H1 (cell line): ENCODE measurements at regions of chr11 and their contacts with region 1.

Region 1: GRCh38 chr11:100681064-100681502 is 6.0 kb upstream of the ARHGAP42 start:
- DNase-seq: no peak
- H3K4me3 ChIP-seq: no peak overlapping the region
- H3K27ac ChIP-seq: no peak overlapping the region
- H3K4me1 ChIP-seq: peaks cover 2 to 8% (median 4%) of the 10 kb centered on the region in 4 experiments; a peak in 5 of 7 replicates
- H3K27me3 ChIP-seq: no peaks in the 10 kb centered on the region
- CTCF ChIP-seq: no peak
- EP300 ChIP-seq: no peak
- POLR2A ChIP-seq: no peak
- RAD21 ChIP-seq: no peak

Region 2: DNA sequence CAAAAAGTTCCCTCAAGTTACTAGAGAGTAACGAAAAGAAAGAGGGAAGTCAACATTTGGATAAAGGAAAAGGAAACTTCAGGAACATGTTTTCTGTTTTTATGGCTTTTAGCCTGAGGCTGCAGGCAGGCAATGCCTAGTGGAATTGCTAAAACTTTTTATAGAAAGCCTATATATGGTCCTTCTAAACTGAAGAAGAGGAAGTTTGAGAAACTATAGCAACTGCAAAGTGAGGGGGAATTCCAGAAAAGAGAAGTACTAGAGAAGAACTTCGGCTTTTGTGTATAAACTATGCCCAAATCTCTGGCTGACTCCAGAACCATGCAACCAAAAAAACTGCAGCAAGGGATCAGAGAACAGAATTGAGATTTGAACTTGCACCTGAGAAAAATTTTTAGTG is 68.3 kb before region 1 on chr11:
- CTCF ChIA-PET with region 1: no interaction called
- POLR2A ChIA-PET with region 1: no interaction called
- DNase-seq: no peak
- H3K4me3 ChIP-seq: no peak overlapping the region
- H3K27ac ChIP-seq: no peak overlapping the region
- H3K4me1 ChIP-seq: no peaks in the 10 kb centered on the region
- H3K27me3 ChIP-seq: no peaks in the 10 kb centered on the region
- CTCF ChIP-seq: no peak
- EP300 ChIP-seq: no peak
- POLR2A ChIP-seq: no peak
- RAD21 ChIP-seq: no peak

Region 3: DNA sequence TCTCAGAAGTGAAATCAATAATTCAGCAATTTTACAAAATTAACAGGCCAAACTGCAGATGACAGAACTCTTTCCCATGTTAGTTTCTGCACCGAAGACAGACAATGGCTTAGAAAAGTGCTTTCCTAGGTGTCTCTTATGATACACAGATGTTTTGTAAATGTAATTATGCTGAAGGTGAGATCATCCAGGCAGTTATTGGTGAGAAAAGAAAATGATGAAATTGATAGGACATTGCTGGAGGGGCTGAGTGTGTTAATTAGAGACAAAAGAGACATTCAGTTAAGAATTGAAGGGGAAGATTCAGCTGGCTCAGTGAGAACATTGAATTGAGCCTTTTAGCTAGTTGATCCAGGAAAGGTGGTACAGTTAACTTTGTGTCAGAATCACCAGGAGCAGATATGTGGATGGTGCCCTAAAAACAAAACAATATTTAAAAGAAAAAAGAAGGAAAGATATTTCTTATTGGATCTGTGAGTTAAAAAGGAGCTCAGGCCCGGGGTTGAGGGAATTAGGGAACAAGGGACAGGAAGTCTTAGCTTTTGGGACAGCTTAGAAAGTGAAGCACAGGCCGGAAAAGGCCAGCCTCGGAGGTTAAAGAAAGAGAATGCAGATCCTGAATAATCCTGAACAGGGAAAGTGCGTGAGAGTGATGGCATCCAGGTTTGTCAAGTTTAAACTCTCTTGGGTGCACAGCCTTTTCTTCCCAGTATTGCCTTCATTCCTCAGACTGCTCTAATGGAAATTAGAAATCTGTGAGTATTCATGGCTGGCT is 22.9 kb after region 1 on chr11:
- CTCF ChIA-PET with region 1: no interaction called
- POLR2A ChIA-PET with region 1: no interaction called
- DNase-seq: no peak
- H3K4me3 ChIP-seq: no peak overlapping the region
- H3K27ac ChIP-seq: no peak overlapping the region
- H3K4me1 ChIP-seq: peaks cover 0 to 6% (median 4%) of the 10 kb centered on the region in 4 experiments; a peak in 4 of 7 replicates
- H3K27me3 ChIP-seq: no peaks in the 10 kb centered on the region
- CTCF ChIP-seq: no peak
- EP300 ChIP-seq: no peak
- POLR2A ChIP-seq: no peak
- RAD21 ChIP-seq: no peak

Region 4: GRCh38 chr11:100753172-100753543 is 72.1 kb after region 1 on chr11:
- CTCF ChIA-PET with region 1: interaction called, 25 read pairs
- POLR2A ChIA-PET with region 1: no interaction called
- DNase-seq: peak; percentile 43 to 61
- H3K4me3 ChIP-seq: no peak overlapping the region
- H3K27ac ChIP-seq: 0 out of 2 replicates have a peak overlapping the region, but pooled peaks have one; percentile 14
- H3K4me1 ChIP-seq: peaks cover 8 to 21% (median 18%) of the 10 kb centered on the region in 4 experiments; a peak in 6 of 7 replicates
- H3K27me3 ChIP-seq: no peaks in the 10 kb centered on the region
- CTCF ChIP-seq: peak in 1 of 3 experiments; percentile 7; a peak in 1 of 4 replicates
- EP300 ChIP-seq: no peak
- POLR2A ChIP-seq: no peak
- RAD21 ChIP-seq: peak; percentile 4 to 18; a peak in 1 of 4 replicates

Region 5: GRCh38 chr11:100827934-100828661 is 147.0 kb after region 1 on chr11:
- CTCF ChIA-PET with region 1: interaction called, 13 read pairs
- POLR2A ChIA-PET with region 1: no interaction called
- DNase-seq: no peak
- H3K4me3 ChIP-seq: no peak overlapping the region
- H3K27ac ChIP-seq: peak overlapping the region; percentile 11; the same call in 1 of the 2 replicates
- H3K4me1 ChIP-seq: peaks cover 4 to 30% (median 18%) of the 10 kb centered on the region in 4 experiments; a peak in 6 of 7 replicates
- H3K27me3 ChIP-seq: peaks cover 0 to 1% (median 0%) of the 10 kb centered on the region in 4 experiments; a peak in 1 of 7 replicates
- CTCF ChIP-seq: peak in 1 of 3 experiments; percentile 26; a peak in 1 of 4 replicates
- EP300 ChIP-seq: no peak
- POLR2A ChIP-seq: no peak
- RAD21 ChIP-seq: peak; percentile 6 to 37; a peak in 1 of 4 replicates

Region 6: DNA sequence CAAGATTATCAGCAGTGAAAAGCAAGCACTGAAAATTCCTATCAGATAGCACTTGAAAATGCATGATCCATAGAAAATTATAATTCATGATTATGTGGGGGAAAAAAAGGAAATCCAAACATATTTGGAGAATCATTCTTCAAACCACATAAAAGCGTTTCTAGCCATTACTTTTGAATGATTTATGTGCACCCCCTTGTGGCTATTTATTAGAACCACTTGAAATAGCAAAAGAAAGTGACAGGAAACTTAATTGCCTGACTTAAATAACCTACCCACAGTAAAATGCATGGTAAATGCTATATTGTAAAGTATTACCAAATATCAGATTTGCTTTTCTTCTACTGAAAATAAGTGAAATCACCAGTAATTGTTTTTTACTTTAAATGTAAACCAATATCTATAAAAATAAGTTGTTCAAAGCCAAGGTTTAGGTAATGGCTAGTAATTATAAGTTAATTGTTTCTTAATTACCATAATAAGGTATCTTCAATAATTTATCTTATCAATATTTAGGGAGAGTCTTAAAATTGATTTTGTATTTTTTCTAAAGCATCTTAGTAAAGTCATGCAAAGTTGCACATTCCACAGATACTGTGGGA is 174.5 kb after region 1 on chr11:
- CTCF ChIA-PET with region 1: interaction called, 12 read pairs
- POLR2A ChIA-PET with region 1: no interaction called
- DNase-seq: no peak
- H3K4me3 ChIP-seq: no peak overlapping the region
- H3K27ac ChIP-seq: no peak overlapping the region
- H3K4me1 ChIP-seq: peaks cover 0 to 15% (median 10%) of the 10 kb centered on the region in 4 experiments; a peak in 4 of 7 replicates
- H3K27me3 ChIP-seq: no peaks in the 10 kb centered on the region
- CTCF ChIP-seq: peak in 2 of 3 experiments; percentile 10 to 53; a peak in 2 of 4 replicates
- EP300 ChIP-seq: no peak
- POLR2A ChIP-seq: no peak
- RAD21 ChIP-seq: peak; percentile 70 to 81